ENCODE measurements at regions of chr19 and their contacts with region 1.

Region 1: GRCh38 chr19:46515879-46516350 is 20.2 kb upstream of the PNMA8B start:
- DNase-seq: peak; percentile 58 to 78 (median 71)
- H3K4me3 ChIP-seq: no peak overlapping the region
- H3K27ac ChIP-seq: no peak overlapping the region
- H3K4me1 ChIP-seq: peaks cover 1 to 15% (median 9%) of the 10 kb centered on the region in 4 experiments
- H3K27me3 ChIP-seq: peaks cover 0 to 21% (median 0%) of the 10 kb centered on the region in 5 experiments

Region 2: DNA sequence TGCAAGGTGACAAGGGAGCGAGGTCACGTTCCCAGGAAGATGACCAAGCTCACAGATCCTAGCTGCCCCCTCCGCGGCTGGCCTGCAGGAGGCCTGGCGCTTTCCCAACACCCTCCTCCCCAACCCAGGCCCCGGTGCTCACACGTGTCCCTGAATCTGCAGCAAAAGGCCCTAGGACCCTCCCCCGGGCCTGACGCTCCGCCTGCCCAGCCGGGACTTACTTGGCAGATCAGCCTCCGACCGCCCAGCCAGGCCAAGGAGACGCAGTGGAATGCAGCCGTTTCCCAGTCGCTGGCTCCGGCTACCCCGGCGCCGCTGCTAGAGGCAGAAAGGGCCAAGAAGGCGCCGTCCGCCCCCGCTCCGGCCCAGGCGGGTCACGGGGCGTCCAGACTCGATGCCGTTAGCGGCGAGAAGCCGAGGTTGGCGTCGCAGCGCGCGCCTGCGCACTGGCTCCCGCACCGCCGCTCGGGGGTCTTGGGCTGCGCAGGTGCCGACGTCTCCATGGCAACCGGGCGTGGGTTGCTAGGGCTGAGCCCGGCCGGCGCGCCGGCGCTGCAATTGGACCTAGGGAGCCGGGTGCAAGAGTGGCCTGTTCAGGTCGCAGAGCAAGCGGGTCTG is 44.7 kb before region 1 on chr19 and contains the start of gene PNMA8A:
- CTCF ChIA-PET with region 1: no interaction called
- POLR2A ChIA-PET with region 1: no interaction called
- DNase-seq: peak in 2 of 3 donors; percentile 66 to 72
- H3K4me3 ChIP-seq: peak within 1 kb of the TSS in 4 of 7 experiments; percentile 30 to 39 (median 35)
- H3K27ac ChIP-seq: no peak within 1 kb of the TSS
- H3K4me1 ChIP-seq: peaks cover 0 to 13% (median 7%) of the 10 kb centered on the region in 4 experiments
- H3K27me3 ChIP-seq: peaks cover 0 to 67% (median 25%) of the 10 kb centered on the region in 5 experiments

Region 3: DNA sequence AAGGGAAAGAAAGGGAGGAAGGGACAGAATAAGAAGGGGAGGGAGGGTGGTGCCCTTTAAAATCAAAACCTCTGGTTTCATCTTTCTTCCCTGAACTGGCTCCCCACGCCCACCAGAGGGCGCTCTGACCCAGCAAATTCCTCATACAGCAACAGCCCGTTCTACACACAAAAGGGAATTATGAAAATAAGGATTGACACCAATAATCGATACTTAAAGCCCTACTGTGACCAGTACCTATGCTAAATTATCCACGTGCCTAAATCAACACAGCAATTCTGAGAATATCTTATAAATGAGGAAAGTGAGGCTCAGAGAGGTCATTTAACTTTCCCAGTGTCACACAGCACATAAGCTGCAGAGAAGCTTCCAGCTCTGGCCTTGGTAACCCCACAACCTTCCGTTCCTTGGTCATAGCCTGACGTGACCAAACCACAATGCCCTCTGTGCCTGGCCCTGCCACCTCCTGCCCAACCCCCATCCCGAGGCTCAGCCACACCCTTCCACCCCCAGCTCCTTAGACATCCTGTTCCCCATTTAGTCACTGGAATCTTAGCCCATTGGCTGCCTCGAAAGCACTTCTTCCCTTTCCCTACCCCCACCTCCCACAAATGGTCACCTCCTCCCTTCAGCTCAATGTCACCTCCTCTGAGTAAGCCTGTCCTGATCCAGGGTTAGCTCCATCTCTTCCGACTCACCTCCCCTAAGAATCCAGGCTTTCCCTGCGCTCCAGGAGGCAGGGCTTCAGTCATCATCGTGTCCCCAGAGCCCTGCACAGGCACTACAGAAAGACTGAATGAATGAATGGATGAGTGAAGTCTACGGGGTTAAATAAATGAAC is 13.9 kb after region 1 on chr19:
- CTCF ChIA-PET with region 1: interaction called, 19 read pairs
- POLR2A ChIA-PET with region 1: no interaction called
- DNase-seq: peak; percentile 59 to 73 (median 64)
- H3K4me3 ChIP-seq: no peak overlapping the region
- H3K27ac ChIP-seq: no peak overlapping the region
- H3K4me1 ChIP-seq: peaks cover 0 to 16% (median 4%) of the 10 kb centered on the region in 4 experiments
- H3K27me3 ChIP-seq: peaks cover 0 to 3% (median 0%) of the 10 kb centered on the region in 5 experiments